ENCODE measurements at regions of chr6 and their contacts with region 1.

Region 1: DNA sequence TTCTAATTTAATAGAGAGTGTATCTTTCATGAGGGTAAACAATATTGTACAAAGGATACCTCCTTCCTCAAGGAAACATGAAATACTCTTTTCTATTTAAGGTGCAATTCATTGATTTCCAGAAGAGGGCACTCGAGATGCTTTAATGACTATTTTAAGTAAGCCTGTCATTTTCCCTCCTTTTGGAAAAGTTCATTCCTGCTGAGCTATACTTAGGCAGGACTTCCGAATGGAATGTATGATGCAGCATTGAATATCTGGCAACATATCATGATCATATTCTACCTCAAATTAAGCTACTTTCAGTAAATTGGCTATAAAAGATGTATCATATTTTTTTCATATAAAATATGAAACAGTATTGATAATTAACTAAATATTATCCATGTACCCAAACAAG is 5.0 kb downstream of the DST start:
- DNase-seq: peak; percentile 83
- H3K4me3 ChIP-seq: no peak overlapping the region
- H3K27ac ChIP-seq: no peak overlapping the region
- H3K4me1 ChIP-seq: peaks cover 4% of the 10 kb centered on the region
- H3K27me3 ChIP-seq: no peaks in the 10 kb centered on the region
- CTCF ChIP-seq: peak; percentile 41 to 42
- POLR2A ChIP-seq: no peak

Region 2: DNA sequence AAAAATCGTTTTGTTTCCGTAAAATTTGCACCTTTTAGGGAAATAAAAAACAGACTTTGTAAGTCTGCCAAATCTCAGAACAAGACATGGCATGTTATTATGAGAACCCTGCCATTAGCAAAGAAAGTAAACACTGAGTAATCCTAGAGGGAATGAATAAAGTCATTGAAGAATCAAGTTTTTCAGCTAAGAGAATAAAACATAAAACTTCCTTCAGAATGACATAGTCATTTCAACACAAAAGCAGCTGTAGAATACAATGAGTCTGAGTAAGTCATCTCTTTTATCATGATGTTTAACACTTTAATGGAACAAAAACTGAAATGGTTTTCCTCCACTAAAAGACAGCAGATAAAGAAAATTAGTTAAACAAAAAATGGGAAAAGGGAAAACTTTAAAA is 15.4 kb after region 1 on chr6:
- CTCF ChIA-PET with region 1: interaction called, 15 read pairs
- POLR2A ChIA-PET with region 1: no interaction called
- dilution Hi-C with region 1: no loop called
- intact Hi-C with region 1: no loop called
- DNase-seq: peak; percentile 86
- H3K4me3 ChIP-seq: no peak overlapping the region
- H3K27ac ChIP-seq: peak overlapping the region; percentile 66
- H3K4me1 ChIP-seq: peaks cover 46% of the 10 kb centered on the region
- H3K27me3 ChIP-seq: no peaks in the 10 kb centered on the region
- CTCF ChIP-seq: no peak
- POLR2A ChIP-seq: no peak

Region 3: GRCh38 chr6:56693246-56693607 is 55.6 kb after region 1 on chr6:
- CTCF ChIA-PET with region 1: interaction called, 187 read pairs
- POLR2A ChIA-PET with region 1: no interaction called
- dilution Hi-C with region 1: no loop called
- intact Hi-C with region 1: no loop called
- DNase-seq: no peak
- H3K4me3 ChIP-seq: no peak overlapping the region
- H3K27ac ChIP-seq: peak overlapping the region; percentile 44
- H3K4me1 ChIP-seq: peaks cover 52% of the 10 kb centered on the region
- H3K27me3 ChIP-seq: no peaks in the 10 kb centered on the region
- CTCF ChIP-seq: no peak
- POLR2A ChIP-seq: no peak

Region 4: DNA sequence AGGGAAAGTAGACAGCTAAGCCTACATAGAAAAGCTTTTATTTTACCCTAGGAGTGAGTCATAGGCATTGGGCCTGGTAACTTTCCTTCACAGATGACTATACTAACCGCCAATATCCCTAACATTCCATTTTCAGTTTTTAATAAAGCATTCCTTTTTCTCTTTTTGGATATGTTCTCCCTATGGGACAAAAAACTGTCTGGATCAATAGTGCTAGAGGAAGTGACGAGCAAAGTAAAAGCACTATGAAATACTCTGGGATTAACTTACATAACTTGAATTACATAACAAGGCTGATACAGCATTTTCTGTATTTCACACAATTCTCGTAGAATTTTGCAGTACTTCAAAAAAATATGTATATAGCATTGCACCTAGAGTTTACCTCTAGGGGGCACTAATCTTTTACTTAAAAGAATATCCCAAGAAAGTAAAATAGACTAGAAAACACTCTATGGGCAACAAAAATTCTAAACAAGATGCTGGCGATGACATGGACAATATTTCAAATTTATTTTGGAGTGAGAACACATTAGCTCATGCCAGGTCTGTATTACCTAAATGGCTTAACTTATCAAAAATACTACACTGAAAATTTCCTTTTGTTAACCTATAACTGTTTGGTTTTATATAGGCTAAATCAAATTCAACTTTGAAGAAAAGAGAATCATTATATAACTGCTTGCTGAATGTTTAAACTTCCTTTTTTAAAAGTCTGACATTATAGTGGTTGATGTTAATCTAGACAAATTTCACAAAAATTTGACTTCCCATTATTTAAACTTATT is 71.4 kb after region 1 on chr6:
- CTCF ChIA-PET with region 1: interaction called, 34 read pairs
- POLR2A ChIA-PET with region 1: no interaction called
- dilution Hi-C with region 1: no loop called
- intact Hi-C with region 1: no loop called
- DNase-seq: peak; percentile 73
- H3K4me3 ChIP-seq: peak overlapping the region in 1 of 3 experiments; percentile 15
- H3K27ac ChIP-seq: peak overlapping the region; percentile 69
- H3K4me1 ChIP-seq: peaks cover 30% of the 10 kb centered on the region
- H3K27me3 ChIP-seq: no peaks in the 10 kb centered on the region
- CTCF ChIP-seq: peak; percentile 30 to 40
- POLR2A ChIP-seq: no peak

Region 5: DNA sequence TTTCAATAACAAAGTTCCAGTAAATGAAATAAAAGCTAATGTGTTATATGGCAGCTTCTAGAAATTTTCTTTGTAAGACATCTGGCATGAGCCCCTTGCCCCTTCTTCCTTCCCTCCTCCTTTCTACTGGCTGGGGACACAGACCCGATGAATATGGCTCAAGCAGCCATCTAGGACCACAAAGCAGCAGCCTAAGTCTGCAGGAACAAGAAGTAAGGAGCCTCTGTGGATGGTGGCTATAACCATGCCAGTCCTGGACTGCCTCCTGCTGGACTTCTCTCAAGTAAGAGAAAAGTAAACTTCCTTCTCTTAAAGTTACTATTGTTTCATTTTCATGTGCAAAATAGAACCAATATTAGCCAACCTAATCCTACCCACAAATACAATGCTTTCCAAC is 119.9 kb after region 1 on chr6:
- CTCF ChIA-PET with region 1: interaction called, 62 read pairs
- POLR2A ChIA-PET with region 1: no interaction called
- dilution Hi-C with region 1: no loop called
- intact Hi-C with region 1: loop called (anchors 1 kb)
- DNase-seq: peak; percentile 76
- H3K4me3 ChIP-seq: no peak overlapping the region
- H3K27ac ChIP-seq: no peak overlapping the region
- H3K4me1 ChIP-seq: no peaks in the 10 kb centered on the region
- H3K27me3 ChIP-seq: no peaks in the 10 kb centered on the region
- CTCF ChIP-seq: peak; percentile 36 to 45
- POLR2A ChIP-seq: no peak